Left cardiac atrium (tissue), 4 donors: ENCODE measurements at regions of chr5 and their contacts with region 1.

Region 1: GRCh38 chr5:139787568-139788293 is 7.9 kb upstream of the PSD2 start:
- DNase-seq: peak; percentile 86
- ATAC-seq: peak; percentile 91 to 94

Region 2: DNA sequence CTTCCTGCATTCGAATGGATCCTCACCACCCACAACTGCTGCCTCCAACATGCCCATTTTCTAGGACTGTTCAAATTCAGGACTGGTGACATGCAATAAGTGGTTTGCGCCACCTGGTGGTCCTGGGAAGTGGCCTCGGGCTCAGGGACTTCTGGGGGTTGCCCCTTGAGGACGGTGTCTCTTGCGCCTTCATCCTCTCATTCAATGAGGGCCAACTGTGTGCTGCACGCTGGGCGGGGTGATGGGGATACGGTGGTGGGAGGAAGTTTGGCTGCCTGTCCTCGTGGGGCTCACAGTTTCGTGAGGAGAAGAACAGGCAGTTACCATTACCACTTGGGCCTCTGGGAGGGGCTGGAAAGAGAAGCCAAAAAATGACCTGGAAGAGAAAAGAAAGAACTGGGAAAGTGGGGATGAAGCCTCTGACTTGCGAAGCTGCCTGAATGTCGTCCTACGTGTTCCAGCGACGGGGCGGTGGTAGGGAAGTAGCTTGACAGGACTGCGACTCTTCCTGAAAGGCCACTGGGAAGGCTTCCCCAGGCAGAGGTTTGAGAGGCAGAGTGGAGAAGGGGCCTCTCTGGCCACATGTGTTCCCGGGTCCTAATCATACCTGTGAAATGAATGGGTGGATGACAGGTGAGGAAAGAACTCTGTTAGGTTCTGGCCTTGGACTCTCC is 56.9 kb after region 1 on chr5:
- intact Hi-C with region 1: loop called (anchors 1 to 5 kb)
- DNase-seq: peak; percentile 84
- ATAC-seq: peak in 1 of 2 donors; percentile 20

Region 3: DNA sequence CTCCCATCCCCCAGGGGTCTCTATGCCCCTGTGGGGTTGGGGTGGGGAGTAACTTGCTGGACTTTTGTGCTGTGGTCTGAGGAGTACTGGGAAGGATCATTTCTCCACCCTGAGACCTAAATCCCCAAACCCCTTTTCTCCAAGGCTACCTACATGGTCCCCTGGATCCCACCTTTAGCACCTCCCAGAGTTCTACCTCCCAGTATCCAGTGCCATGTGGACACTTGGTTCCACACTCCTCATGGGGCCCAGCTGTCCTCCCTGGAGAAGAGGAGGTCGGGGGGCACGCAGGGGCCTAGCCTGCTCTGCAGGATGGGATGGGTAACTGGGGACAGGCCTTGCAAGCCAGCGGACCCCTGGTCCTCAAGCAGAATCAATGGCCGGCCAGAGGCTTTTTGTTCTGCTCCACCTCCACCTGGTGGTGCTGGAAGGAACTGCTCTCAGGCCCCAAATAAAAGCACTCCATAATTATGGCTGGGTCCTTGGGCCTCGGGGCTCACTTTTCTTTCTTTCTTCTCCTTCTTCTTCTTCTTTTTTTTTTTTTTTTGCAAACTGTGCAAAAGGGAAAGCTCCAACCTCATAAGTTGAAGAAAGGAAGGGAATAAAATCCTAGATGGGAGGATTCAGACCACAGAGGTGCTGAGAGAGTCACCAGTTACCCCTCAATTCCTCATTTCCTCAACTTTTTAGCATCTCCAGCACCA is 76.3 kb after region 1 on chr5:
- intact Hi-C with region 1: loop called (anchors 1 to 5 kb)
- DNase-seq: peak; percentile 72
- ATAC-seq: peak; percentile 78 to 84

Region 4: DNA sequence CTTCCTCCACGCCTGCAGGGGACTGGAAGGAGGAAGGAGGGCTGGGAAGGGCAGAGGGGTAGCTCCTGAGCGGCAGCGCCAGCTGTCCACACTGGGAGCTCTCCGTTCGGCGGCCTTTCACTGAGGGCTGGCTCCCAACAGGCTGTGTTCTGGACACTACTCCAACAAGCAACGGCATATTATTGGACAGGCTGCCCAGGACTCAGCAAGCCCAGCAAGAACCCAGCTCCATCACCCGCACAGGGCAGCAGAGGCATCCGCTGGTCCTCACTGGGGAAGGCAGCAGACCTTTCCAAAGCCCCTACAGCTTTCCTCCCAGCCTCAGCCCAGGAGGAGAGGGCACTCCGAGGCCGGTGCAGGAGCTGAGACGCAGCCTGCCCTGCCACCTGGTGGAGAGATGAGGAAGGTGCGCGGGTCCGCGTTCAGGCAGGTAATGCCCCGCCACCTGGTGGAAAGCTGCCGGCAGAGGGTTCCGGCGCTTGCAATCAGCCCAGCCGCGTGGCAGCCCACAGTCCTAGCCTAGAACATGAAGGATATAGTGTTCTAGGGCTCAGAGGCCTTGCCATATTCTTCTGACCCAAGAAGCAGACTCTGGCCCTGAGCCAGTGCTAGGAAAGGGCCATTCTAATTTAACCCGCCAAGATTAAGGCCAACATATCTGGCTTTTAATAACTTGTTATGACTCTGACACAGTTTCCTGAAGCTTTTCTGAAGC is 181.0 kb after region 1 on chr5:
- intact Hi-C with region 1: loop called (anchors 1 to 5 kb)
- DNase-seq: peak; percentile 86
- ATAC-seq: peak; percentile 96

Region 5: DNA sequence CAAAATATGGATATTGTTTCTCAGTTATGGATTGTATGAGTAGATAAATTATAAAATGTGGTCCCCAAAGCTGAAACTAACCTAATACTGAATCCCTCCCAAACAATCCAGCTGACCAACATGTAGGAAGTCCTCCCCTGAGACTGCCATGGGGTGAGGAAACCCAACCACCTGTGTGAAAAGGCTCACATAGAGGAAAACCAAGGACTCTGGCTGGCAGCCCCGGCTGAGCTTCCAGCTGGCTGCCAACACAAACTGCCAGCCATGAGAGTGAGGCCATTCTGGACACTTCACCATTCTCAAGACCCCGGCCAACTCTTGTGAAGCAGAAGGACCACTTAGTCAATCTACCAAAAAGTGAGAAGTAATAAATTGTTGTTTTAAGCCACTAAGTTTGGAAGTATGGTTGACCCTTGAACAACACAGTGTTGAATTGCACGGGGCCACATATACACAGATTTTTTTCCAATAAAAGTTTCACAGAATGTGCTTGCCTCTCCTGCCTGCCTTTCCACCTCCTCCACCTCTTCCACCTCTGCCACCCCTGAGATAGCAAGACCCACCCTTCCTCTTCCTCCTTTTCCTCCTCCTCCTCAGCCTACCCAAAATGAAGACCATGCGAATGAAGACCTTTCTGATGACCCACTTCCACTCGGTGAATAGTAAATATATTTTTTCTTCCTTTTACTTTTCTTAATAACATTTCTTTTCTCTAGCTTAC is 270.6 kb after region 1 on chr5:
- intact Hi-C with region 1: no loop called
- DNase-seq: no peak
- ATAC-seq: no peak

Region 6: DNA sequence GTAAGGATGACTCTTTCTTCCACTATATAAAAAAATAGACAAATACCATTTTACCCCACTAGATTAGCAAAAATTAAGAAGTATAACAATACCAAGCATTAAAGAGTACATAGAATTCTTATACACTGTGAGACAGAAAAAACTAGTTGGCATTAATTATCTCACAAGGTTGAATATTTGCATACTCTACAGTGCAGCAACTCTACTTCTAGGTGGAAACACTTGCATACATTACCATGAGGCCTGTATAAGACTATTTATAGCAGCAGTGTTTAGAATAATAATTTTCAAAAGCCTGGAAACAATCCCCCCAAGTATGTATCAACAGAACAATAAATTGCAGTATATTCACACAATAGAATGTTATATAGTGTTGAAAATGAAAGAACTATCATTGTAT is 307.2 kb after region 1 on chr5:
- intact Hi-C with region 1: no loop called
- DNase-seq: no peak
- ATAC-seq: no peak

Region 7: GRCh38 chr5:140157032-140157803 is 369.5 kb after region 1 on chr5:
- intact Hi-C with region 1: loop called in 1 of 2 experiments (anchors 5 kb)
- DNase-seq: peak; percentile 92
- ATAC-seq: peak; percentile 95 to 96

Region 8: GRCh38 chr5:140182803-140183367 is 395.2 kb after region 1 on chr5:
- intact Hi-C with region 1: no loop called
- DNase-seq: peak; percentile 47
- ATAC-seq: peak; percentile 77 to 81

Region 9: DNA sequence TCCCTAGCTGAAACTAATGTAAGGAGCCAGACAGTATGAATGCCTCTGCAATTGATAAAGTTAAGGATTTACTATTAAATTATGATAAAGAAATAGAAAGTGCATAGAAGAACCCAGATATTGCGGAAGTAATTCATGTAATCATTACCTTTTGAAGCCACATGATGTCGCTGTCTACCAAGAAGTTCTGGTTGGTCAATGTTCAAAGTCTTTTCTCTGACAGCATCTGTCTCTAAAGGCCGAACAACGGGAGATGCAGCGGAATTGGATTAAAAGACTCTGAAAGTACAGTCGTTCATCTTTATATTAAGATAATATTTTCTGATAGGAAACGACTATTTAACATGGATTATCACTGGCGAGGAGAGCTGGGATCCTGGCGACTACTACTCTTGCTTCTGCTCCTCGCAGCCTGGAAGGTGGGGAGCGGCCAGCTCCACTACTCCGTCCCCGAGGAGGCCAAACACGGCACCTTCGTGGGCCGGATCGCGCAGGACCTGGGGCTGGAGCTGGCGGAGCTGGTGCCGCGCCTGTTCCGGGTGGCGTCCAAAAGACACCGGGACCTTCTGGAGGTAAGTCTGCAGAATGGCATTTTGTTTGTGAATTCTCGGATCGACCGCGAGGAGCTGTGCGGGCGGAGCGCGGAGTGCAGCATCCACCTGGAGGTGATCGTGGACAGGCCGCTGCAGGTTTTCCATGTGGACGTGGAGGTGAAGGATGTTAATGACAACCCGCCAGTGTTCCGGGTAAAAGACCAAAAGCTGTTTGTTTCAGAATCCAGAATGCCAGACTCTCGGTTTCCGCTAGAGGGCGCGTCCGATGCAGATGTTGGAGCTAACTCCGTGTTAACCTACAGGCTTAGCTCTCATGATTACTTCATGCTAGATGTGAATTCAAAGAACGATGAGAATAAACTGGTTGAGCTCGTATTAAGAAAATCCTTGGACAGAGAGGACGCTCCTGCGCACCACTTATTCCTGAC is 1053.5 kb after region 1 on chr5 and contains the start of gene PCDHA8:
- intact Hi-C with region 1: no loop called
- DNase-seq: no peak
- ATAC-seq: no peak
- total RNA-seq, gene PCDHA8: 0.06 to 0.10 TPM